H1 (cell line): ENCODE measurements at regions of chr14 and their contacts with region 1.

Region 1: GRCh38 chr14:22505697-22506377 is 83.2 kb downstream of the DAD1 start:
- DNase-seq: no peak
- H3K4me3 ChIP-seq: no peak overlapping the region
- H3K27ac ChIP-seq: no peak overlapping the region
- H3K4me1 ChIP-seq: peaks cover 0 to 3% (median 1%) of the 10 kb centered on the region in 4 experiments; a peak in 3 of 7 replicates
- H3K27me3 ChIP-seq: no peaks in the 10 kb centered on the region; a peak in 1 of 7 replicates
- CTCF ChIP-seq: no peak
- EP300 ChIP-seq: no peak
- POLR2A ChIP-seq: peak in 1 of 2 experiments; percentile 66; a peak in 2 of 3 replicates
- RAD21 ChIP-seq: no peak

Region 2: DNA sequence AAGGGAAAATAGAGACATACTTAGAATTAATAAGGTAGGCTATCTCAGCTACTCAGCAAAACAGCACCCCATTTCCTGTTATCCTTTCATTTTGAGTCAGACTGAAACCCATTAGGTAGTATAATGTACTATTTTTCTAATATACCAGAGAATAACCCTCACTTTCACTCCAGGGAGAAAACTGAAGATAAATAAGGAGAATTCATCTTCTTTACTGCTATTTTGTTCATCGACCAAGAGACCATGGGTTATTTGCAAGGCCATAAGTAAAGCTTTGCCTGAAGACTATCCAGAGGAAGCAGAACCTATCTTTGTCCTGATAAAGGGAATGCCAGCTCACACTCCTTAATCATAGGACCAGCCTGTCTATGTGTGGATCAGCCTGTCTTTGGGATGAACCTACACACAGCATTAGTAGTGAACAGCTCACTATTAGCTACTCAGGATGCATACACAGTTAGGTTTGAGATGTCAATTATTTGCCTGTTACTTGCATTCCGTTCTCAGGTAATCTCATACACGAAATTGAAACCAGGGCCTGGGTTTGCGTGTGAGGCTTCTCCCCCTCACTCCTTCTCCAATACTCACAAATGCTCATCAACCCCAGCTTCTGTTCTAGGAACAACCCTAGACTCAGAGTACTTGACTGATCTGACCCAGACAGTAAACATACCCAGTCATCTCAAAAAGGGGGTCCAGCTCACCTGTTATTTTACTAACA is 41.3 kb before region 1 on chr14:
- CTCF ChIA-PET with region 1: no interaction called
- POLR2A ChIA-PET with region 1: no interaction called
- DNase-seq: no peak
- H3K4me3 ChIP-seq: no peak overlapping the region
- H3K27ac ChIP-seq: no peak overlapping the region
- H3K4me1 ChIP-seq: no peaks in the 10 kb centered on the region
- H3K27me3 ChIP-seq: no peaks in the 10 kb centered on the region
- CTCF ChIP-seq: no peak
- EP300 ChIP-seq: no peak
- POLR2A ChIP-seq: no peak
- RAD21 ChIP-seq: no peak

Region 3: GRCh38 chr14:22491683-22492621 is 13.9 kb before region 1 on chr14:
- CTCF ChIA-PET with region 1: interaction called, 13 read pairs
- POLR2A ChIA-PET with region 1: no interaction called
- DNase-seq: no peak
- H3K4me3 ChIP-seq: no peak overlapping the region
- H3K27ac ChIP-seq: no peak overlapping the region
- H3K4me1 ChIP-seq: peaks cover 0 to 7% (median 0%) of the 10 kb centered on the region in 4 experiments; a peak in 1 of 7 replicates
- H3K27me3 ChIP-seq: no peaks in the 10 kb centered on the region
- CTCF ChIP-seq: no peak
- EP300 ChIP-seq: no peak
- POLR2A ChIP-seq: no peak
- RAD21 ChIP-seq: no peak